ENCODE measurements at regions of chr2 and their contacts with region 1.

Region 1: GRCh38 chr2:216777650-216778273 is 82.1 kb downstream of the TNP1 start:
- DNase-seq: peak in 3 of 9 donors; percentile 2 to 30 (median 24)
- ATAC-seq: peak; percentile 76
- H3K4me3 ChIP-seq: no peak overlapping the region
- H3K4me3 Mint-ChIP-seq: no peak overlapping the region
- H3K27ac ChIP-seq: no peak overlapping the region
- H3K27ac Mint-ChIP-seq: peak overlapping the region in 1 of 9 donors; percentile 8
- H3K4me1 ChIP-seq: no peaks in the 10 kb centered on the region
- H3K4me1 Mint-ChIP-seq: peaks cover 0 to 12% (median 0%) of the 10 kb centered on the region in 7 donors
- H3K27me3 ChIP-seq: no peaks in the 10 kb centered on the region
- H3K27me3 Mint-ChIP-seq: peaks cover 7 to 11% (median 8%) of the 10 kb centered on the region in 5 donors

Region 2: DNA sequence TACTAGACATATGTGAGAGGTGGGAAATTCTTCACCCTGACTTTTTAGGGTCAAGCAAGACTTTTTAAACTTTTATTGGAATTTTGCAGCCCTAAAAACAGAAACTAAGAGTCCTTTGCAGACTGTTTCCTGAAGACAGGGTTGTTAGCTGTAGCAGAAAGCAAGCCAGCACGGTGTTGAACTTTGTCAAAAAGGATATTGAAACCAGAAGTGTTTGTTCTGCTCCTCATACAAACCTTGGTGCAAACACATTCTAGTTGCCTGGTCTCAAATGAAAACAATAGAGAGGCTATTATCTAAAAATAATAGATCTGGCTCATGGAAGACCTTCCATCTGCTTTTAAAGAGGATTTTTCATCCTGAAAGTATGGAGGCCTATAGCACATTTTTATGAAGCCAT is 16.6 kb before region 1 on chr2:
- CTCF ChIA-PET with region 1: no interaction called
- POLR2A ChIA-PET with region 1: no interaction called
- intact Hi-C with region 1: no loop called
- DNase-seq: no peak
- ATAC-seq: no peak
- H3K4me3 ChIP-seq: no peak overlapping the region
- H3K4me3 Mint-ChIP-seq: no peak overlapping the region
- H3K27ac ChIP-seq: no peak overlapping the region
- H3K27ac Mint-ChIP-seq: no peak overlapping the region
- H3K4me1 ChIP-seq: no peaks in the 10 kb centered on the region
- H3K4me1 Mint-ChIP-seq: no peaks in the 10 kb centered on the region
- H3K27me3 ChIP-seq: no peaks in the 10 kb centered on the region
- H3K27me3 Mint-ChIP-seq: peaks cover 7 to 23% (median 11%) of the 10 kb centered on the region in 5 donors

Region 3: DNA sequence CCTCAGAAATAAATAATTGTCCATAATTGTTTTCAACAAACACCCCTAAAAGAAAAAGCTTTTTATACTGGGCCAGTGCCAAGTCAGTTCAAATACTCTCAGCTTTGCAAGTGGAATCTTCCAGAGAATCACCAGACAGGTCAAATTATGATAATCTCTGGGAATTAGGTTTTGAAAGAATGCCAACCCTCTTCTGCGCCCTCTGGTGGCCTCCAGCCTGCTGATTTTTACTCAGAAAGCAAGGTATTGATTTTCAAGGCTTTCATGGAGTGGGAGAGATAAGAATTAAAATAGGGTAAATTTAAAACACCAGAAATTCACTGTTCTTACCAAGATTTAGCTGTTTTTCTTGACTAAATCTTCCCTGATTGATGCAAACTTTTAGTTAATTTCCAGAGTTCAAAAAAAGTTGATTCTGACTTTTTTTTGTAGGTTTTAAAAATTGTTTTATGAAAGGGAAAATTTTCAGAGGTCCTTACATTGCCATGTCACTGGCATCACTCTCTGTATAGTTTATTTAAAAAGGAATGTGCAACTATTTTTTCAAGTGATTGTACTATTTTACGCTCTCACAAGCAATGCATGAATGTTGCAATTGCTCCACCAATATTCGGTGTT is 365.0 kb after region 1 on chr2:
- CTCF ChIA-PET with region 1: no interaction called
- POLR2A ChIA-PET with region 1: no interaction called
- intact Hi-C with region 1: loop called in 1 of 2 experiments (anchors 1 kb)
- DNase-seq: peak in 1 of 9 donors; percentile 27
- ATAC-seq: no peak
- H3K4me3 ChIP-seq: no peak overlapping the region
- H3K4me3 Mint-ChIP-seq: no peak overlapping the region
- H3K27ac ChIP-seq: no peak overlapping the region
- H3K27ac Mint-ChIP-seq: no peak overlapping the region
- H3K4me1 ChIP-seq: no peaks in the 10 kb centered on the region
- H3K4me1 Mint-ChIP-seq: no peaks in the 10 kb centered on the region
- H3K27me3 ChIP-seq: no peaks in the 10 kb centered on the region
- H3K27me3 Mint-ChIP-seq: peaks cover 0 to 29% (median 14%) of the 10 kb centered on the region in 5 donors

Region 4: DNA sequence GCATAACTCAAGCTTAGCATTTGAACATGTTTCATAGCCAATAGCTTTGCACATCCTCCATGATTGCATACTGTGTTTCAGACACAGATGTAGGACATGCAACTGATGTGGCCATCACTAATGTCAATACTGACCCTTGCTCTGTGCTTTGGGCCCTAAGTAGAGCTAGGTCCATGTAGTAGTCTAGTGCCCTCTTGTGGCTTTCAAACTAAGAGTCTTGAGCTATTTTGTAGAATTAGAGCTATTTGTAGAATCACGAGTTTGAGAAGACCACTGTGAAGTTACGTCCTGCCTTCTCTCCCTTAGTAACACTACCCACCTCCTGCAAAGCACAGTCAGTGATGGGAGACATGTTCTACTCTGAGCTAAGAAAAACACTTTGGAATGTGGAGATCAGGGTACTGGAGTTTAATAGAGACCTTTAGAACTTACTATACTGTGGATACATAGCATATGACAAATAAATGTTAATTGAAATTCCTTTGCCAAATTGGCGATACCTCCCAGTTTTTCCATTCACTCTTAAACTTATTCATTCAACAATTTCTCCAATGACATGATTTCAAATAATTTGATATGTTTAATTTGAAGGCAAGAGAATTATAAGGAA is 388.6 kb after region 1 on chr2:
- CTCF ChIA-PET with region 1: no interaction called
- POLR2A ChIA-PET with region 1: no interaction called
- intact Hi-C with region 1: loop called in 1 of 2 experiments (anchors 1 kb)
- DNase-seq: no peak
- ATAC-seq: no peak
- H3K4me3 ChIP-seq: no peak overlapping the region
- H3K4me3 Mint-ChIP-seq: no peak overlapping the region
- H3K27ac ChIP-seq: no peak overlapping the region
- H3K27ac Mint-ChIP-seq: no peak overlapping the region
- H3K4me1 ChIP-seq: no peaks in the 10 kb centered on the region
- H3K4me1 Mint-ChIP-seq: peaks cover 11 to 20% (median 16%) of the 10 kb centered on the region in 7 donors
- H3K27me3 ChIP-seq: no peaks in the 10 kb centered on the region
- H3K27me3 Mint-ChIP-seq: peaks cover 0 to 33% (median 14%) of the 10 kb centered on the region in 5 donors

Region 5: DNA sequence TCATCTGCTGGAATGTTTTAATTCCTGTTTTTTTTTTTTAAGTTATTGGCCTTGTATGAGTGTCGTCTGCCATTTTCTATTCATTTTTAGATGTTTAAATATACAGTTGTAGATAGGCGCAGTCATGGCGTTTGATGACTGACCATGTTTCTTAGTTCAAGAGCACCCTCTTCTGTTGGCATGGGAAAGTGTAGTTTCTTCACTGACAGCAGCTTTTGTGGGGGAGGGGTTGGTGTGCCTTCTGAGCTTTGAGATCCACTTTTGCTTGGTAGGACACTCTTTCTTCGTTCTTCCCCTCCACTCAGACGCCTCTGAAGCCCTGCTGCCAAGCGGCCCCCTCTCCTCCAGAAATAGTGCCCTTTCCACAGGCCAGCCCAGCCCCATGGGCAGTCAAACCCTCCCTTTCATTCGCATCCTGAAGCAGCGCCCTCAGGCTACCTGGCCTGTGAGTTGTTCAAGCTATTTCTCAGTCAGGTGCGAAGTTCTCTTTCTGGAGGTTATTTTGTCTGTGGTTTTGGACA is 733.1 kb after region 1 on chr2:
- CTCF ChIA-PET with region 1: no interaction called
- POLR2A ChIA-PET with region 1: no interaction called
- intact Hi-C with region 1: loop called in 1 of 2 experiments (anchors 2 kb)
- DNase-seq: peak in 8 of 9 donors; percentile 11 to 59 (median 40)
- ATAC-seq: peak; percentile 82
- H3K4me3 ChIP-seq: no peak overlapping the region
- H3K4me3 Mint-ChIP-seq: peak overlapping the region in 2 of 10 donors; percentile 14 to 20
- H3K27ac ChIP-seq: no peak overlapping the region
- H3K27ac Mint-ChIP-seq: no peak overlapping the region
- H3K4me1 ChIP-seq: no peaks in the 10 kb centered on the region
- H3K4me1 Mint-ChIP-seq: peaks cover 0 to 13% (median 7%) of the 10 kb centered on the region in 7 donors
- H3K27me3 ChIP-seq: no peaks in the 10 kb centered on the region
- H3K27me3 Mint-ChIP-seq: peaks cover 4 to 19% (median 7%) of the 10 kb centered on the region in 5 donors

Region 6: GRCh38 chr2:218202266-218202665 is 1424.5 kb after region 1 on chr2:
- CTCF ChIA-PET with region 1: no interaction called
- POLR2A ChIA-PET with region 1: no interaction called
- intact Hi-C with region 1: no loop called
- DNase-seq: no peak
- ATAC-seq: no peak
- H3K4me3 ChIP-seq: no peak overlapping the region
- H3K4me3 Mint-ChIP-seq: no peak overlapping the region
- H3K27ac ChIP-seq: no peak overlapping the region
- H3K27ac Mint-ChIP-seq: no peak overlapping the region
- H3K4me1 ChIP-seq: no peaks in the 10 kb centered on the region
- H3K4me1 Mint-ChIP-seq: peaks cover 0 to 4% (median 0%) of the 10 kb centered on the region in 7 donors
- H3K27me3 ChIP-seq: no peaks in the 10 kb centered on the region
- H3K27me3 Mint-ChIP-seq: peaks cover 0 to 48% (median 4%) of the 10 kb centered on the region in 5 donors

Measured in naive thymus-derived CD4-positive, alpha-beta T cell (primary cell).